Right ventricle myocardium inferior (tissue), 1 donor: ENCODE measurements at regions of chr15 and their contacts with region 1.

Region 1: DNA sequence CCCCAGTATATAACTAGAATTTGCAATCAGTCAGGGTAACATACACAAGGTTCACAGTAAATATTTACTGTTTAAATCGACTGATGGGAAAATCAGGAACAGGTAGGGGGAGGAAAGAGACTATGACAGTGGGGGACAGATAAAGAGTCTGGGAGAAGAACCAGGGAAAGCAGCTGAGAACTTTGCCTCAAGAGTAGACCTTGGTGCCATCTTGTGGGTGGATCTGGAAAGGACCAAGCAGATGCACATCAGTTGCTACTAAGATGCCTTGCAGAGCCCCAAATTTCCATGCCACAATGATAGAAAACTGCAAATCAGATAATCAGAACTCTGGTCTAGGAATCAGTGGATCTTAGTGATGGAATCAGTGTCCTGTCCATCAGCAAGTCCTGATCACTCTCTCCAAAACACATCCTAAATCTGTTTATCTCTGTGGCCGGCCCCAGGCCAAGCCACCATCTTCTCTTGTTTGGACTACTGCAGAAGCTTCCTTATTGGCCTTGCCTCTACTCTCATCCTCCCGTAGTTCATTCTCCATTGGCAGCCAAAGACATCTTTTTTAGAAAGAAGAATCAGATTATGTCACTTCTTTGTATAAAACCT is 62.7 kb downstream of the PDE8A start:
- DNase-seq: no peak
- ATAC-seq: peak; percentile 67

Region 2: DNA sequence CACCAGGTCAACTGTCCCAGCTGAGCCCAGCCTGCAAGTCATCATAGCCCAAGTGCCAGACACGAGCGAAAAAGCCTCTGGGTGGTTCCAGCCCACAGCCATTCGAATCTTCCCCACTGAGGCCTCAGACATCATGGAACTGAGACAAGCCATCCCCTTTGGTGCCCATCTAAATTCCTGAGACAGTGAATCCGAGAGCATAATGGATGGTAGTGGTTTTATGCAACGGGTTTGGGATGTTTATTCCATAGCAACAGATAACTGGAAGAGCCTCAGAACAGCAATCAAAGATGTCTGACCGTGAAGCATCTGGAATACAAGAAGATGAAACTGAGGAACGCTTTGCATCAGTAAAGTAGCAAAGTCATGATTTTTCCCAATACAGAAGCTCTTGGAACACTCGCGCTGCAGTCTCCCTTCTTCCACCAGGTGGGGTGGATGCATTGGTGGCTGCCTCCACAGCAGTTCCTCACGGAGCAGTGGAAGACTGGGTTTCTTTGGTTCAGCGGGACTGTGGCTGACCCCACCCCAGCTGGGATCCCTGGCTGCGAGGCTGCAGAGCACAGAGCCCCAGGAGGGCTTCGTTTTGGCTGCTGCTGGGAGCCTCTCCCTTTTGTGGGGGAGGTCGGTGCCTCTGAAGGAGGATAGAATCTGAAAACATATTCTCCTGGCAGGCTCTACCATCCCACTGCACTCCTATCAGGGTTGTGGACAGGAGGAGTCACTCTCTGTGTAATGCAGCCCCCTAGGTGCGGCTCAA is 89.1 kb before region 1 on chr15:
- intact Hi-C with region 1: loop called (anchors 1 kb)
- DNase-seq: peak; percentile 79
- ATAC-seq: peak; percentile 92